ENCODE measurements at regions of chr12 and their contacts with region 1.

Region 1: DNA sequence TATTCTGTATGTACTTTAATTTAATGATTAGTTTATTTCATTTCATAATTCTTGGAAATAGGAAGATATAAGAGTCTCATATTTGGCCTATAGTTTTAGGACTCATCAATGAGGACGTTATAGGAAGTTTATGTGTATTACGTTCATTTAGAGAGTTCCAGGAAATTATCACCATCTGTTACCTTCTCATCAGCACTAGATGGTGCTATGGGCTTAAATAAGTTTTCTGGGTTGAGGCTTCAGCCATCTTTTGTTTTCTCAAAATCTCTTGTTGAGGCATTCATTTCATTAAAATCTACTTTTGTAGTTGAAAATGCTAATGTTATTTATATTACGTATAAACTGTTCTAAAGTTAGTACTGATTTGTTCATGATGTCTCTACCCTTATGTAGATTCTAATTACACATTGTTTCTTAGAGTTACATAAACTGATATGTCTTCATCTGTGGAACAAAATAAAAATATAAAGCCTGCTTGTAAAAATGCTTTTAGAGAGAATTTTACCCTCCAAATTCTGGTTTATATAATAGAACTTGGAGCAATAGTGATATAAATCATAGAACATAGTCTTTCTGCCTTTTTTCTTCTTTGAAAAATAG is 89.2 kb downstream of the CFAP54 start:
- DNase-seq: no peak
- H3K4me3 ChIP-seq: no peak overlapping the region
- H3K27ac ChIP-seq: no peak overlapping the region
- H3K4me1 ChIP-seq: no peaks in the 10 kb centered on the region
- H3K27me3 ChIP-seq: no peaks in the 10 kb centered on the region
- CTCF ChIP-seq: peak; percentile 43

Region 2: GRCh38 chr12:96094201-96094600 is 484.4 kb before region 1 on chr12:
- intact Hi-C with region 1: no loop called
- DNase-seq: no peak
- H3K4me3 ChIP-seq: no peak overlapping the region
- H3K27ac ChIP-seq: no peak overlapping the region
- H3K4me1 ChIP-seq: no peaks in the 10 kb centered on the region
- H3K27me3 ChIP-seq: no peaks in the 10 kb centered on the region
- CTCF ChIP-seq: no peak

Region 3: DNA sequence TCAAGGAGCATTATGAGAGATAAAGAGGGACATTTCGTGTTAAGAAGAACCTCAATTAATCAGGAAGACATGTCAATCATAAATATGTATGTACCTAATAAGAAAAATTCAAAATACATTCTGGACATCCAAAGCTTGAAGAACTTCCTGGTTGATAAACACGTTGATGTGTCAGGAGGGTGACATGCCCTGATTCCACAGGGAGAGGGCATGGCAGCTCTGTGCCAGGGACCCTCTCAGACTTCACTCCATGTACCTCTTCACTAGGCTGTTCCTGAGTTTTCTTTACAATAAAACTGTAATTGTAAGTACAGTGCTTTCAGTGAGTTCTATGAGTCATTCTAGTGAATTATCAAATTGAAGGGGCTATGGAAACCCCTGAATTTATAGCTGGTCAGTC is 74.2 kb after region 1 on chr12:
- intact Hi-C with region 1: no loop called
- DNase-seq: no peak
- H3K4me3 ChIP-seq: no peak overlapping the region
- H3K27ac ChIP-seq: no peak overlapping the region
- H3K4me1 ChIP-seq: no peaks in the 10 kb centered on the region
- H3K27me3 ChIP-seq: no peaks in the 10 kb centered on the region
- CTCF ChIP-seq: no peak

Region 4: DNA sequence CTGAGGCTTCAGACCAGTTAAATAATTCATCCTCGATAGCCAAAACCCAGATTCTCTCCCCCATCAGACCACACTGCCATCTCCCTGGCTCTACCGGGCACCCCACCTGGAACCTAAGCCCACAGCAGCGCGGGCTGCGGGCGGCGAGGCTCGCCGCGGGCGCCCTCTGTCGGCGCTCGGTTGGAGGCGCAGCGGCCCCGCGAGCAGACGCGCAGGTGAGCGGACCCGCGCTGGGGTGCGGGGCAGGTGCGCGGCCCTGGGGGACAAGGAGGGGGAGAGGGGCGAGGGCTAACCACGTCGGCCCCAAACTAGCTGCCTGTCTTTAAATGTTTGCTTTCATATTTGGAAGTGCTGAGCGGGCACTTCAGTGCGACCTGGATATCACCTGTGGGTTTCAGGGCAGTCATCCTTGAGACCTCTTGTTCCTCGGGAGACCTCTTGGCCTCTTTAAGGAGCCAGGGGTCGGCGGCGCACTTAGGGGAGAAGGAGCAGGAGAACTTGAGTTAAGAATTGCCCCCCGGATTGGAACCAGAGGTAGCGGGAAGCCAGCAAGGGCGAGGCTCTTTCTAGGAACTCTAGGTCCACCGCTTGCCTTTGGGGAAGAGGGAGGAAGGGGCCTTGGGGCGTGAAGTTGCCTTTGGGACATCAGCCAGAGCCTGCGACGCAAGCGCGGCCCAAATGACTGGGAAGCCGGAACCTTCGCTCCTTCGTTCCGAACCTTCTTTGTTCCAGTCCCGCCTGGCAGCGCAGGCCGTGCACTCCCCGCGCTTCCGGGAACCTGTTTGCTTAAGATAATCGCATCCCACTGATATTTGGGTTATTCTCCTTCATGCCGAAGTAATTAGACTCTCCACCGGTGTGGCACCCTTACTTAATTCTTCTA is 407.1 kb after region 1 on chr12:
- intact Hi-C with region 1: loop called (anchors 5 kb)
- DNase-seq: no peak
- H3K4me3 ChIP-seq: peak overlapping the region; percentile 30
- H3K27ac ChIP-seq: no peak overlapping the region
- H3K4me1 ChIP-seq: no peaks in the 10 kb centered on the region
- H3K27me3 ChIP-seq: peaks cover 7% of the 10 kb centered on the region
- CTCF ChIP-seq: peak; percentile 94

Region 5: GRCh38 chr12:97308576-97309198 is 730.1 kb after region 1 on chr12:
- intact Hi-C with region 1: loop called (anchors 5 kb)
- DNase-seq: no peak
- H3K4me3 ChIP-seq: no peak overlapping the region
- H3K27ac ChIP-seq: no peak overlapping the region
- H3K4me1 ChIP-seq: no peaks in the 10 kb centered on the region
- H3K27me3 ChIP-seq: no peaks in the 10 kb centered on the region
- CTCF ChIP-seq: peak; percentile 72